Left cardiac atrium (tissue), 4 donors: ENCODE measurements at regions of chr14 and their contacts with region 1.

Region 1: DNA sequence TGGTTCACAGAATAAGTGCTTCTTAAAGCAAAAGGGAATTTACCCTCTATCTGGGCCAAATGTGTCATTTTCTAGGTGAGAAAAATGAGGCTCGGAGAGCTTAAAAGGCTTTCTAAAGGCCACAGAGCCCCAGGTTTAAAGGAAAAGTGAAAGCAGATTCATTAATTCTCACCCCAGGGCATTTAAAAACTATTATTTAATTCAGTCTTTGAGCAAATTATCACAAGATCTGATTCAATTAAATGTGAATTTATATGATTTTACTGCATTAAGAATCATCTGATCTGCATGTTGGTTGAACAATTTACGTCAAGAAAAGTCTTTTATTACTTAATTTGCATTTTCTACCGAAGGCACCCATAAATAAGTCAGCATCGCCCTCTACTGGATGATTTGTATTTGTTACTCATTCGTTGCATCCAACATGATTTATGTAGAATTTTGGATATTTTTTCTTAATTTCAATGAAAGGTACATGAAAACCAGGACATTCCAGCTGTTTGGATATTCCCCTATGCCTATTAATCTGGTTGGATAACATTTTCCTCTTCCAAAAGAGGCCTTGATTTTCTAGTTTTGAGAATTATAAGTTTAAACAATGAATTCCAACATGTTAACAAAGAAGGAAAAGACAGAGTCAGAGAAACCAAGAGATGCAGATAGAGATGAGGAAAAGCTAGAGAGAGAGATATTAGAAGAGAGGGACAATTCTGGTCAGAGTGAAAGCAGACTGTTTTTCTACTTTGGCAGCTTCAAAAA is 19.1 kb upstream of the DHRS7 start:
- DNase-seq: no peak
- ATAC-seq: peak; percentile 47 to 63

Region 2: GRCh38 chr14:59507063-59507780 is 677.1 kb before region 1 on chr14:
- intact Hi-C with region 1: loop called (anchors 10 kb)
- DNase-seq: peak; percentile 37
- ATAC-seq: peak; percentile 61 to 77

Region 3: DNA sequence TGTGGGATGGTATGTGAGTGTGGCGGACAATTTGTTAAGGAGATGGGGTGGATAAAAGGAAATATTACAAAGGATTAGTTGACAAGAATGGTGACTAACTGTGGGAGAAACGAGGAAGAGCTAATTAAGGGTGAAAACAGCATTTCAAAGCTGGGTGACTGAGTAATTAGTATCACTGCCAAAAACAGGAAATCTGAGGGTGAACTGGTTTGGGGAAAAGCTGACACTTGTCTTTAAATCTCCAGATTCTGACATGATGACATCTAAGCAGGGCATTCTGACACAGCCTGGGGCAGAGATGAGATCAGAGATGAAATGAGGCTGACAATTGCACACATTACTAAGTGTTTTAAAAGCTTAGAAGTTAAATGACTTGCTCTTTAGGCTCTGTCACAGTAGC is 565.3 kb before region 1 on chr14:
- intact Hi-C with region 1: no loop called
- DNase-seq: no peak
- ATAC-seq: no peak

Region 4: GRCh38 chr14:59964251-59965007 is 219.9 kb before region 1 on chr14:
- intact Hi-C with region 1: loop called (anchors 5 to 10 kb)
- DNase-seq: no peak
- ATAC-seq: peak in 1 of 2 donors; percentile 26

Region 5: DNA sequence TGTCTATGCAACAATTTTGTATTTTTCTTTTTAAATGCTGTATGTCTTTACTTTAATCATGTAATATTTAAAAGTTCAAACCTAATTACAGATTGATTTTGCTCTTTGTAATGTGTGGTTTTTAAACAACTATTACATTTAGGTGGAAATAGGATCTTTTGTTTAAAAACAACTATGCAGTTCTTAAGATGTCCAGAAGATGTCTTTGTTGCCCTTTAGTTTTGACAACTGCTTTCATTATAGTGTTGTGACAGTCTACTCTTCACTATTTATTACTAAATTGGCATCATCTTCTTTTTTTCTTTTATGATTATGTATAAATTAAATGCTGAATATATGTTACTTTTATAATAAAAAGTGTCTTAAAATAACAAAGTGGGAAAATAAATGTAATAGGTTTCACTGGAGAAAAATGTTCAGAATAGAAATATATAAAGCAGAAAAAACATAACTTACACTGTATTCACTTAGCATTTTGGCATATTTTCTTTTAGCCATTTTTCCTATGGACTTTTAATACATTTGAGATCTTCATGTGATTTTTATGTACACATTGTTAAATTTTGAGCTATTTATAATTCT is 119.7 kb before region 1 on chr14:
- intact Hi-C with region 1: loop called (anchors 1 to 5 kb)
- DNase-seq: no peak
- ATAC-seq: no peak